Testis (tissue), 5 donors: ENCODE measurements at regions of chr21 and their contacts with region 1.

Region 1: GRCh38 chr21:32412162-32413014 is at the start of gene EVA1C:
- DNase-seq: peak; percentile 60
- H3K4me3 ChIP-seq: peak within 1 kb of the TSS; percentile 70 to 87
- H3K27ac ChIP-seq: peak within 1 kb of the TSS; percentile 97 to 98
- H3K4me1 ChIP-seq: peaks cover 40% of the 10 kb centered on the region
- H3K27me3 ChIP-seq: no peaks in the 10 kb centered on the region
- CTCF ChIP-seq: no peak
- POLR2A ChIP-seq: no peak
- total RNA-seq, gene EVA1C: 28.4 to 44.2 TPM

Region 2: GRCh38 chr21:32457360-32457840 is 45.0 kb after region 1 on chr21:
- intact Hi-C with region 1: loop called (anchors 5 kb)
- DNase-seq: peak; percentile 60
- H3K4me3 ChIP-seq: no peak overlapping the region
- H3K27ac ChIP-seq: peak overlapping the region; percentile 56 to 90
- H3K4me1 ChIP-seq: peaks cover 24% of the 10 kb centered on the region
- H3K27me3 ChIP-seq: no peaks in the 10 kb centered on the region
- CTCF ChIP-seq: no peak
- POLR2A ChIP-seq: no peak